Posterior cingulate gyrus (tissue), 11 donors: ENCODE measurements at regions of chr17 and their contacts with region 1.

Region 1: GRCh38 chr17:51540151-51540550 is 279.8 kb downstream of the UTP18 start:
- DNase-seq: peak in 8 of 10 donors; percentile 31 to 91 (median 67)

Region 2: GRCh38 chr17:51298508-51299371 is 241.4 kb before region 1 on chr17:
- intact Hi-C with region 1: loop called (anchors 2 kb)
- DNase-seq: no peak

Region 3: DNA sequence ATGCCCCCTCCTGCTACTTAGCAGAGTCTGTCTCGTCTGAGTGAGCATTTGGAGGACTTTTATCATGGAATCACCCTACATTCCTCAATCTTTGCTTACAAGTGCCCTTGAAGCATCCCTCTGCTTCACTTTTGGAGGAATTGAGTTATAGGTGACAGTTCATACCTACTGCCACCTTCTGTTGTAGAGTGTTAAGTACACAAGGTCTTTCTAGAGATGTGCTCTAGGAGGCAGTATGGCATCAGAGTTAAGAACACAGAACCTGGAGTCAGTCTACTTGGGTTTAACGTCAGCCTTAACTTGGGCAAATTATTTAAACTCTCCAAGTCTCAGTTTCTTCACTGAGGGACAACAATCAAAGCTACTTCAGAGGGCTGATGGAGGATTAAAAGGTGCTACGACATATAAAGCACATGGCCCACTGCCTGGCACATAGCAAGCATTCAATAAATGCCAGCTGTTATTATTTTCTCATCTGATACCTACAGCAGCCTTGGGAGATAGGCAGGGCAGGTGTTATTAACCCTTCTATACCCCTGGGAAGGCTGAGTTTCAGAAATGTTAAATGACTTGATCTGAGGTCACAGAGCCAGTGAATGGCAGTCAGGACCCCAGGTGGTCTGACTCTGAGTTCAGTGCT is 217.6 kb before region 1 on chr17:
- intact Hi-C with region 1: loop called (anchors 5 kb)
- DNase-seq: no peak